ENCODE measurements at regions of chr14 and their contacts with region 1.

Region 1: GRCh38 chr14:24605435-24606190 is 3.9 kb downstream of the GZMH start:
- DNase-seq: peak in 8 of 9 donors; percentile 18 to 75 (median 46)
- ATAC-seq: peak; percentile 79
- H3K4me3 ChIP-seq: no peak overlapping the region
- H3K4me3 Mint-ChIP-seq: peak overlapping the region in 2 of 10 donors; percentile 52 to 85
- H3K27ac ChIP-seq: no peak overlapping the region
- H3K27ac Mint-ChIP-seq: peak overlapping the region in 6 of 9 donors; percentile 18 to 86 (median 36)
- H3K4me1 ChIP-seq: peaks cover 0 to 51% of the 10 kb centered on the region in 2 donors
- H3K4me1 Mint-ChIP-seq: peaks cover 0 to 56% (median 3%) of the 10 kb centered on the region in 7 donors
- H3K27me3 ChIP-seq: no peaks in the 10 kb centered on the region
- H3K27me3 Mint-ChIP-seq: peaks cover 0 to 4% (median 0%) of the 10 kb centered on the region in 5 donors

Region 2: GRCh38 chr14:24481622-24482324 is 123.8 kb before region 1 on chr14:
- CTCF ChIA-PET with region 1: interaction called, 3 read pairs
- POLR2A ChIA-PET with region 1: no interaction called
- intact Hi-C with region 1: loop called in 1 of 2 experiments (anchors 1 kb)
- DNase-seq: peak in 6 of 9 donors; percentile 24 to 51 (median 35)
- ATAC-seq: peak; percentile 71
- H3K4me3 ChIP-seq: peak overlapping the region; percentile 26
- H3K4me3 Mint-ChIP-seq: peak overlapping the region in 8 of 10 donors; percentile 39 to 81 (median 60)
- H3K27ac ChIP-seq: no peak overlapping the region
- H3K27ac Mint-ChIP-seq: peak overlapping the region in 7 of 9 donors; percentile 13 to 85 (median 70)
- H3K4me1 ChIP-seq: peaks cover 12 to 19% of the 10 kb centered on the region in 2 donors
- H3K4me1 Mint-ChIP-seq: peaks cover 0 to 28% (median 15%) of the 10 kb centered on the region in 7 donors
- H3K27me3 ChIP-seq: no peaks in the 10 kb centered on the region
- H3K27me3 Mint-ChIP-seq: peaks cover 0 to 3% (median 0%) of the 10 kb centered on the region in 5 donors

Region 3: GRCh38 chr14:24673534-24674203 is 68.1 kb after region 1 on chr14:
- CTCF ChIA-PET with region 1: interaction called, 5 read pairs
- POLR2A ChIA-PET with region 1: no interaction called
- intact Hi-C with region 1: loop called (anchors 1 kb)
- DNase-seq: peak in 8 of 9 donors; percentile 48 to 72 (median 60)
- ATAC-seq: peak; percentile 90
- H3K4me3 ChIP-seq: peak overlapping the region; percentile 49
- H3K4me3 Mint-ChIP-seq: peak overlapping the region; percentile 74 to 92 (median 86)
- H3K27ac ChIP-seq: peak overlapping the region; percentile 51
- H3K27ac Mint-ChIP-seq: peak overlapping the region; percentile 72 to 95 (median 89)
- H3K4me1 ChIP-seq: peaks cover 30 to 43% of the 10 kb centered on the region in 2 donors
- H3K4me1 Mint-ChIP-seq: peaks cover 36 to 81% (median 59%) of the 10 kb centered on the region in 7 donors
- H3K27me3 ChIP-seq: no peaks in the 10 kb centered on the region
- H3K27me3 Mint-ChIP-seq: no peaks in the 10 kb centered on the region

Region 4: DNA sequence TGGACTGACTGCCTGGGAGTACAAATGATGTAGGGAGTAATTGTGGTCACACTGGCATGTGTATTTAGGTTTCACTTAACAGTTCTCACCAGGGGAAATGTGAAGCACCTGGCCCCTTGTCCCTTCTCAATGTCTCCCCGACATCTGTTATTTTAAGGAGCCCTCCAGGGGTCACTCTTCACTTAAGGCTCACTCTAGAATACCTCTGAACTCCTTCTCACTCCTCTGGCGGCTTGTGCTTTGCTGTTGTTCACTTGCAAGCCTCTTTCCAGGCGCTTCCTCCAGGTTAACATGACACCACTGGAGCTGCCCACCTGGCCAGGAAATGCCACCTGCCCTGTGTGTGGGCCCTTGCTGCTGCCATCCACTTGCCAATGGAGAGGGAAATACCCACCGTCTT is 84.9 kb after region 1 on chr14:
- CTCF ChIA-PET with region 1: interaction called, 4 read pairs
- POLR2A ChIA-PET with region 1: no interaction called
- intact Hi-C with region 1: loop called in 1 of 2 experiments (anchors 5 kb)
- DNase-seq: no peak
- ATAC-seq: no peak
- H3K4me3 ChIP-seq: no peak overlapping the region
- H3K4me3 Mint-ChIP-seq: no peak overlapping the region
- H3K27ac ChIP-seq: no peak overlapping the region
- H3K27ac Mint-ChIP-seq: no peak overlapping the region
- H3K4me1 ChIP-seq: peaks cover 0 to 45% of the 10 kb centered on the region in 2 donors
- H3K4me1 Mint-ChIP-seq: peaks cover 11 to 44% (median 12%) of the 10 kb centered on the region in 7 donors
- H3K27me3 ChIP-seq: no peaks in the 10 kb centered on the region
- H3K27me3 Mint-ChIP-seq: peaks cover 2 to 10% (median 4%) of the 10 kb centered on the region in 5 donors

Region 5: GRCh38 chr14:24725311-24725710 is 119.7 kb after region 1 on chr14:
- CTCF ChIA-PET with region 1: no interaction called
- POLR2A ChIA-PET with region 1: no interaction called
- intact Hi-C with region 1: no loop called
- DNase-seq: no peak
- ATAC-seq: no peak
- H3K4me3 ChIP-seq: no peak overlapping the region
- H3K4me3 Mint-ChIP-seq: no peak overlapping the region
- H3K27ac ChIP-seq: no peak overlapping the region
- H3K27ac Mint-ChIP-seq: no peak overlapping the region
- H3K4me1 ChIP-seq: no peaks in the 10 kb centered on the region
- H3K4me1 Mint-ChIP-seq: peaks cover 0 to 3% (median 0%) of the 10 kb centered on the region in 7 donors
- H3K27me3 ChIP-seq: no peaks in the 10 kb centered on the region
- H3K27me3 Mint-ChIP-seq: peaks cover 7 to 63% (median 37%) of the 10 kb centered on the region in 5 donors

Region 6: GRCh38 chr14:25132732-25133422 is 527.3 kb after region 1 on chr14:
- CTCF ChIA-PET with region 1: no interaction called
- POLR2A ChIA-PET with region 1: no interaction called
- intact Hi-C with region 1: loop called (anchors 1 to 5 kb)
- DNase-seq: peak in 7 of 9 donors; percentile 2 to 30 (median 19)
- ATAC-seq: peak; percentile 90
- H3K4me3 ChIP-seq: no peak overlapping the region
- H3K4me3 Mint-ChIP-seq: peak overlapping the region in 1 of 10 donors; percentile 56
- H3K27ac ChIP-seq: no peak overlapping the region
- H3K27ac Mint-ChIP-seq: no peak overlapping the region
- H3K4me1 ChIP-seq: peaks cover 0 to 3% of the 10 kb centered on the region in 2 donors
- H3K4me1 Mint-ChIP-seq: peaks cover 0 to 8% (median 5%) of the 10 kb centered on the region in 7 donors
- H3K27me3 ChIP-seq: no peaks in the 10 kb centered on the region
- H3K27me3 Mint-ChIP-seq: peaks cover 17 to 57% (median 51%) of the 10 kb centered on the region in 5 donors